A549 (cell line): ENCODE measurements at regions of chr2 and their contacts with region 1.

Region 1: DNA sequence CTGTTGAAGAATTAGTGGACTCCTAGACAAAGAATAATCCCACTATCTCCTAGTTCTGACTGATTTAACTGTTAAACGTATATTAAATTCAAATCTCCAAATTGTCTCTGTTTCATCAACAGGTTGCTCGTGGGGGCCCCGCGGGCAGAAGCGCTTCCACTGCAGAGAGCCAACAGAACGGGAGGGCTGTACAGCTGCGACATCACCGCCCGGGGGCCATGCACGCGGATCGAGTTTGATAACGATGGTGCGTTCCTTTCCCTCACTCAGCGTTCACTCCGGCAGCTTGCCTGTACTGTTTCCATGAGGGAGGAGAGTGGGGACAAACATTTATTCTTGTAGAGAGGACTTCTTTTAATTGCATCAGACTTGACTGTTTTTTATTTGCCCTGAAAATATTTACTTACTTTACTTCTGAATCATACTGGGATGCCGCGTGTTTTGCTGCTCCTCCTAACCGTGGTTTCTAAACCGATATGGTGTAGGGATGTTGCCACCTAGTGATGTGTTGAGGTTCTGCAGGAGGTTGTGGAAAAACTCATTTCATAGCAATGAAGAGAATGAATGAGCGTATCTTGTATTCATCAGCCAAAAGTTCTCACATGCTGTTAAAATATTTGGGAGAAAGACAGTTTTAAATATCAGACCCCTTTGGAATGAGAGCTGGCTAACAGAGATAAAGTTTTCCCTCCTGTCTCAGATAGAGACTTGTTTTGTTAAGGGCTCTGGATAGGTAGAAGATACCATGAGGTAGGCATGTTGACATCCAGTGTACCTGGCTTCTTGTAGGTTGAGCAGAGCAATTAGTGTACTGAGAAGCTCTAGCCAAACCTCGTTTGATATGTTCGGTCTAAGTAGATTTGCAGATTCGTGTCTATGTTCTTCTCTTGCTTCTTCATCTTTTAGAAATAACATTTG is 38.3 kb downstream of the ITGA6 start:
- DNase-seq: peak; percentile 40 to 87
- ATAC-seq: peak; percentile 86 to 87
- H3K4me3 ChIP-seq: peak overlapping the region; percentile 20
- H3K27ac ChIP-seq: peak overlapping the region; percentile 24 to 69; a peak in 5 of 6 replicates
- H3K4me1 ChIP-seq: peaks cover 8% of the 10 kb centered on the region; the same call in 2 of the 3 replicates
- CTCF ChIP-seq: peak; percentile 93
- EP300 ChIP-seq: no peak
- POLR2A ChIP-seq: no peak
- RAD21 ChIP-seq: peak; percentile 93 to 95

Region 2: DNA sequence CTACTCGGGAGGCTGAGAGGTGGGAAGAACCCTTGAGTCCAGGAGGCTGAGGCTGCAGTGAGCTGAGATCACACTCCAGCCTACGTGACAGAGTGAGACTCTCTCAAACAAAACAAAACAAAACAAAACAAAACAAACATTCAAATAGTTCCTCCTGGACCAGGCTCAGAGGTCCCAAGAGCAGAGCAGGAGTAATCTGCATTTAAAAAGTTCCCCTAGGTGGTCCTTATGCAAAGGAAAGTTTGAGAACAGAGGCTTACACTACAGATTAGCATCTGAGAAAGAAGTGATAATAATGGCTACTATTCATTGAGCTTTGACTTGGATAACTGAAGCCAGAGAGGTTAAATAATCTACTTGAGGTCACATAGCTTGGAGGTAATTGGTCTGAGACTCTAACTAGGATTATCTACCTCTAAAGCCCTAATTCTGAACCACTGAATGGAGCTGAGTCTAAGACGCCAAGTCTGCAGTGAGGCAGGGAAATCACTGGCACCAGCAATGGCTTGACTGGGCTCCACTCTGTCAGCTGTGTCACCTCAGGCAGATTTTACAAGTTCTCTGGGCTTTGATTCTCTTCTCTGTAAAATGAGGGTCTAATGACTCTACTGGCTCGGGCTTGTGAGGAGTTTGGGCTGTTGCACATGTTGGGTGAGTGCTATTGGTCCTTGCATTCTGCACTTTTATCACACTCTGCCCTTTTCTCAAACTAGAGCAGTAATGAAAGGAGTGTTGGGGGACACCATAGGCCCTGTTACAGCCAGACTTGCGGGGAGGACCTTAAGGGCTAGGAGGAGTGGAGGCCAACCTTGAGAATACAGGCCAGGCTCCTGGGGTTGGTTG is 333.7 kb before region 1 on chr2:
- CTCF ChIA-PET with region 1: interaction called, 12 read pairs
- POLR2A ChIA-PET with region 1: no interaction called
- DNase-seq: no peak
- ATAC-seq: no peak; a peak in 1 of 6 replicates
- H3K4me3 ChIP-seq: no peak overlapping the region
- H3K27ac ChIP-seq: no peak overlapping the region
- H3K4me1 ChIP-seq: no peaks in the 10 kb centered on the region
- CTCF ChIP-seq: no peak
- EP300 ChIP-seq: no peak
- POLR2A ChIP-seq: no peak
- RAD21 ChIP-seq: no peak

Region 3: GRCh38 chr2:172220121-172220520 is 245.6 kb before region 1 on chr2:
- CTCF ChIA-PET with region 1: interaction called, 11 read pairs
- POLR2A ChIA-PET with region 1: no interaction called
- DNase-seq: no peak
- ATAC-seq: no peak
- H3K4me3 ChIP-seq: no peak overlapping the region
- H3K27ac ChIP-seq: no peak overlapping the region
- H3K4me1 ChIP-seq: no peaks in the 10 kb centered on the region
- CTCF ChIP-seq: no peak
- EP300 ChIP-seq: no peak
- POLR2A ChIP-seq: no peak
- RAD21 ChIP-seq: no peak

Region 4: DNA sequence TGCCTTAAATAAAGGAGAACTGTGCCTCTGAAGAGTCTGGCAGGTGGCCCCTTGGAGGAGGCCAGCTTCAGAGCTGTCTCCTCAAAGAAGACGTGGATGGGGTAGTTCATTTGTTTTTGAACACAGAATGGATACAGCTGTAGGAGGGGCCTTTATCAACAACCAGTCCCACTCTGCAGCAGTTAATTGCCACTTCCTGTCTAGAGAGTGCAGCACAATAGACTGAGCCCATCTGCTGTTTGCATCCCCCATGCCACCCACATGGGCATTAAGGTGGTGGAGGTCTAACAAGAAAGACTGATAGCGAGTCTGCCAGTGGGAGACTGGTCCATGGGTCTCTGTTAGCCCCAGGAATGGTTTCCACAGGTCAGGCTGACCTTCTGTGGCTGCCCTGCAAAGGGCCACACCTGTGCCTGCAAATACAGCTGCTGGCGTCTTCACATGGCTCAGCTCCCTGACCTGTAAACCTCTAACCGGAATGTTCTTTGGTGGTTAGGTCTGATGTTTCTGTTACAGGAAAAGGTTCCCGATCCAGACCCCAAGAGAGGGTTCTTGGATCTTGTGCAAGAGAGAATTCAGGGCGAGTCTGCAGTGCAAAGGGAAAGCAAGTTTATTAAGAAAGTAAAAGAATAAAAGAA is 191.6 kb before region 1 on chr2:
- CTCF ChIA-PET with region 1: interaction called, 16 read pairs
- POLR2A ChIA-PET with region 1: no interaction called
- DNase-seq: no peak
- ATAC-seq: no peak
- H3K4me3 ChIP-seq: no peak overlapping the region
- H3K27ac ChIP-seq: no peak overlapping the region
- H3K4me1 ChIP-seq: no peaks in the 10 kb centered on the region
- CTCF ChIP-seq: no peak
- EP300 ChIP-seq: no peak
- POLR2A ChIP-seq: no peak
- RAD21 ChIP-seq: no peak

Region 5: GRCh38 chr2:172416447-172417058 is 49.1 kb before region 1 on chr2:
- CTCF ChIA-PET with region 1: interaction called, 654 read pairs
- POLR2A ChIA-PET with region 1: no interaction called
- DNase-seq: no peak
- ATAC-seq: no peak
- H3K4me3 ChIP-seq: no peak overlapping the region
- H3K27ac ChIP-seq: no peak overlapping the region
- H3K4me1 ChIP-seq: no peaks in the 10 kb centered on the region
- CTCF ChIP-seq: no peak
- EP300 ChIP-seq: no peak
- POLR2A ChIP-seq: no peak
- RAD21 ChIP-seq: no peak

Region 6: DNA sequence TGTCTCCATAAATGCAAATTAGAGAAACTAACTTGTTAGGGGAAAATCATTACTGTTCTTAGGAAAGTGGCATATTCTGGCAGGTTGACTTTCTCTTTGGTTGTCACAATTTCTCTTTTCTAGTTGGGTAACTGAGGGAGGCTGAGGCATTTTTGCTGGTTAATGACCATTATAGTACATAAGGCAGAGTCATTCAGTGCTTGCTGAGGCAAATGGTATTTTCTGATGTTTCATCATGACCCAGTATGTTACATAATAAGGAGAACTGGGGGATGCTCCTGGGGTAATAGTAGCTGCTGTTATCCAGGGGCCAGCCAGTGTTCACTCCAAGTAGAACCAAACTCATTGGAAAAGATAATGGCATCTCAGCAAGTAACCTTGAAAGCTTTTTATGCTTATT is 24.0 kb after region 1 on chr2:
- CTCF ChIA-PET with region 1: interaction called, 18 read pairs
- POLR2A ChIA-PET with region 1: no interaction called
- DNase-seq: no peak
- ATAC-seq: no peak
- H3K4me3 ChIP-seq: no peak overlapping the region
- H3K27ac ChIP-seq: no peak overlapping the region
- H3K4me1 ChIP-seq: no peaks in the 10 kb centered on the region
- CTCF ChIP-seq: no peak
- EP300 ChIP-seq: no peak
- POLR2A ChIP-seq: no peak
- RAD21 ChIP-seq: no peak